Naive thymus-derived CD4-positive, alpha-beta T cell (primary cell): ENCODE measurements at regions of chr16 and their contacts with region 1.

Region 1: GRCh38 chr16:66650707-66651473 is 45.7 kb downstream of the CMTM4 start:
- DNase-seq: peak; percentile 57 to 87 (median 81)
- ATAC-seq: peak; percentile 99
- H3K4me3 ChIP-seq: peak overlapping the region; percentile 44
- H3K4me3 Mint-ChIP-seq: peak overlapping the region; percentile 50 to 86 (median 76)
- H3K27ac ChIP-seq: no peak overlapping the region
- H3K27ac Mint-ChIP-seq: peak overlapping the region in 6 of 9 donors; percentile 41 to 71 (median 62)
- H3K4me1 ChIP-seq: peaks cover 0 to 5% of the 10 kb centered on the region in 2 donors
- H3K4me1 Mint-ChIP-seq: peaks cover 0 to 15% (median 9%) of the 10 kb centered on the region in 7 donors
- H3K27me3 ChIP-seq: no peaks in the 10 kb centered on the region
- H3K27me3 Mint-ChIP-seq: peaks cover 2 to 11% (median 6%) of the 10 kb centered on the region in 5 donors

Region 2: GRCh38 chr16:66696669-66697630 is 46.1 kb after region 1 on chr16 and contains the start of gene CMTM4:
- CTCF ChIA-PET with region 1: interaction called, 3 read pairs
- POLR2A ChIA-PET with region 1: interaction called, 3 read pairs
- intact Hi-C with region 1: loop called (anchors 1 to 5 kb)
- DNase-seq: peak; percentile 56 to 85 (median 72)
- ATAC-seq: peak; percentile 98
- H3K4me3 ChIP-seq: peak within 1 kb of the TSS; percentile 69
- H3K4me3 Mint-ChIP-seq: peak within 1 kb of the TSS; percentile 77 to 91 (median 83)
- H3K27ac ChIP-seq: peak within 1 kb of the TSS; percentile 45
- H3K27ac Mint-ChIP-seq: peak within 1 kb of the TSS in 5 of 9 donors; percentile 36 to 81 (median 47)
- H3K4me1 ChIP-seq: peaks cover 5 to 10% of the 10 kb centered on the region in 2 donors
- H3K4me1 Mint-ChIP-seq: peaks cover 6 to 16% (median 12%) of the 10 kb centered on the region in 7 donors
- H3K27me3 ChIP-seq: no peaks in the 10 kb centered on the region
- H3K27me3 Mint-ChIP-seq: peaks cover 0 to 57% (median 7%) of the 10 kb centered on the region in 5 donors
- total RNA-seq, gene CMTM4: 1.5 to 2.5 (median 1.8) TPM

Region 3: GRCh38 chr16:66740010-66740409 is 89.1 kb after region 1 on chr16:
- CTCF ChIA-PET with region 1: interaction called, 5 read pairs
- POLR2A ChIA-PET with region 1: no interaction called
- intact Hi-C with region 1: loop called in 1 of 2 experiments (anchors 1 kb)
- DNase-seq: peak in 5 of 9 donors; percentile 4 to 32 (median 25)
- ATAC-seq: peak; percentile 62
- H3K4me3 ChIP-seq: no peak overlapping the region
- H3K4me3 Mint-ChIP-seq: no peak overlapping the region
- H3K27ac ChIP-seq: no peak overlapping the region
- H3K27ac Mint-ChIP-seq: peak overlapping the region in 3 of 9 donors; percentile 1 to 40 (median 15)
- H3K4me1 ChIP-seq: peaks cover 0 to 6% of the 10 kb centered on the region in 2 donors
- H3K4me1 Mint-ChIP-seq: peaks cover 15 to 38% (median 29%) of the 10 kb centered on the region in 7 donors
- H3K27me3 ChIP-seq: no peaks in the 10 kb centered on the region
- H3K27me3 Mint-ChIP-seq: no peaks in the 10 kb centered on the region

Region 4: DNA sequence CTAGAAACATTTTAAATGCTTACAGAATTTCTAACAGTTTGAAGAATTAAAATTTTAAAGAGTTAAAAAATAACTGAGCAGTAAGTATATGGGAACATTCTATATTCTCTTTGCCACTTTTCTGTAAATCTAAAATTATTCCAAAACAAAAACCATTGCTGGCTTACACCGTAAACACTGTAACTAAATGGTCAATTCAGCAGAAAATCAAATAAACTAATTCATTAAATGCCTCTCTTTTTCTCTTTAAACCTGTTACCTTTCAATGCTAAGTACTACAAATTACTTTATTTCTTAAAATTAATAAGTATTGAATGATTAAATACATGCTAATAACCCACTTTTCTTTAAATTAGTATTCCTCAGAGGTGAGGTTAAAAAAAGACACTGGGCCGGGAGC is 136.5 kb after region 1 on chr16:
- CTCF ChIA-PET with region 1: no interaction called
- POLR2A ChIA-PET with region 1: no interaction called
- intact Hi-C with region 1: no loop called
- DNase-seq: no peak
- ATAC-seq: no peak
- H3K4me3 ChIP-seq: no peak overlapping the region
- H3K4me3 Mint-ChIP-seq: no peak overlapping the region
- H3K27ac ChIP-seq: no peak overlapping the region
- H3K27ac Mint-ChIP-seq: no peak overlapping the region
- H3K4me1 ChIP-seq: no peaks in the 10 kb centered on the region
- H3K4me1 Mint-ChIP-seq: no peaks in the 10 kb centered on the region
- H3K27me3 ChIP-seq: no peaks in the 10 kb centered on the region
- H3K27me3 Mint-ChIP-seq: peaks cover 0 to 13% (median 0%) of the 10 kb centered on the region in 5 donors